Aorta (tissue), 5 donors: ENCODE measurements at regions of chr2 and their contacts with region 1.

Region 1: DNA sequence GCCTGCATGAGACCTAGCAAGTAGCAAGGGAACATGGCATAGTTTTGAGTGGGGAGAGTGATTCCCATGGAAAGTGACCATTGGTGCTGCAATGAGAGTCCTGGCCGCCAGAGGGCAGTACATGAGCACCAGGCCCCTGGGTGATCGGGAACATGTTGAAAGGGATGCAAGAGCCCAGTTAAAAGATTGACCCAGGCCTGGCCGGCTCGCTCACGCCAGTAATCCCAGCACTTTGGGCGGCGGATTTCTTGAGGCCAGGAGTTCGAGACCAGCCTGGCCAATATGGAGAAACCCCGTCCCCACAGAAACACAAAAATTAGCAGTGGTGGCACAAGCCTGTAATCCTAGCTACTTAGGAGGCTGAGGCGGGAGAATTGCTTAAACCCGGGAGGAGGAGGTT is 22.2 kb downstream of the FAP start:
- DNase-seq: peak; percentile 71 to 91
- ATAC-seq: peak; percentile 94
- H3K4me3 ChIP-seq: no peak overlapping the region
- H3K27ac ChIP-seq: no peak overlapping the region
- H3K4me1 ChIP-seq: peaks cover 0 to 1% of the 10 kb centered on the region in 2 donors
- H3K27me3 ChIP-seq: no peaks in the 10 kb centered on the region

Region 2: DNA sequence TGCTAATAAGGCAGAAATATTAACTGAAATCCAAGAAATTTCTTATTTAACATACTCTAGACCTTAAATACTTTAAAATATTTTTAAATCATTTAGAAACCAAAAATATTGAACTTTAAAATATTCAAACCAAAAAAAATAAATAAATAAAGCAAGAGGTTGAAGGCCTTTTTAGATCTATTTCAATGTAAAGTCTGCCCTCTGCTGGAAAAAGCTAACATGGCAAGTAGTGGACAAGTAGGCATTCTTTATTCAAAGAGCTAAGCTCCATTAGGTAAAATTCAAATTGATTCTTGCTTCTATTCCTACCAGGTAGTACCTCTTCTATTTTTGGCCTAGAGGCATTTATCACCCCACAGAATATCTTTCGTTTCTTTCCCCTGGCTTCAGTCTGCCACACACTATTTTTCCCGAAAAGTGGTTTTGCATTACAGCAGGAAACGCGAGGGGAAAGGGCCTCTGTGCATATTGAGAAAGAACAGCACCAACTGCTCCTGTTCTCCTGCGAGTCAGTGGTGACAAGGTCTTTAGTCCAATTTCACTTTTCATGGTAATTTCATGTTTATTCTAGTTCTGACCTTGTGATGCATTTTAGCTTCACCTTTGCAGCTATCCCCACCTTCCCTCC is 77.0 kb after region 1 on chr2:
- intact Hi-C with region 1: loop called (anchors 1 to 2 kb)
- DNase-seq: no peak
- ATAC-seq: peak; percentile 82
- H3K4me3 ChIP-seq: no peak overlapping the region
- H3K27ac ChIP-seq: no peak overlapping the region
- H3K4me1 ChIP-seq: no peaks in the 10 kb centered on the region
- H3K27me3 ChIP-seq: no peaks in the 10 kb centered on the region